CD4-positive, alpha-beta T cell (primary cell): ENCODE measurements at regions of chr22 and their contacts with region 1.

Region 1: GRCh38 chr22:40436505-40437451 is 66.4 kb downstream of the SGSM3 start:
- DNase-seq: peak in 5 of 14 experiments; percentile 20 to 80 (median 69)
- ATAC-seq: peak; percentile 84
- H3K4me3 ChIP-seq: no peak overlapping the region
- H3K4me3 Mint-ChIP-seq: peak overlapping the region; percentile 23
- H3K27ac ChIP-seq: peak overlapping the region in 1 of 2 donors; percentile 40
- H3K27ac Mint-ChIP-seq: peak overlapping the region; percentile 78
- H3K4me1 ChIP-seq: peaks cover 24% of the 10 kb centered on the region
- H3K4me1 Mint-ChIP-seq: peaks cover 52% of the 10 kb centered on the region
- H3K27me3 ChIP-seq: no peaks in the 10 kb centered on the region
- H3K27me3 Mint-ChIP-seq: no peaks in the 10 kb centered on the region
- CTCF ChIP-seq: peak; percentile 85

Region 2: GRCh38 chr22:38831166-38831945 is 1605.4 kb before region 1 on chr22:
- CTCF ChIA-PET with region 1: no interaction called
- POLR2A ChIA-PET with region 1: no interaction called
- intact Hi-C with region 1: no loop called
- DNase-seq: no peak
- ATAC-seq: no peak
- H3K4me3 ChIP-seq: no peak overlapping the region
- H3K4me3 Mint-ChIP-seq: no peak overlapping the region
- H3K27ac ChIP-seq: no peak overlapping the region
- H3K27ac Mint-ChIP-seq: no peak overlapping the region
- H3K4me1 ChIP-seq: no peaks in the 10 kb centered on the region
- H3K4me1 Mint-ChIP-seq: peaks cover 5% of the 10 kb centered on the region
- H3K27me3 ChIP-seq: no peaks in the 10 kb centered on the region
- H3K27me3 Mint-ChIP-seq: no peaks in the 10 kb centered on the region
- CTCF ChIP-seq: no peak

Region 3: GRCh38 chr22:40310081-40310767 is 126.6 kb before region 1 on chr22:
- CTCF ChIA-PET with region 1: no interaction called
- POLR2A ChIA-PET with region 1: no interaction called
- intact Hi-C with region 1: no loop called
- DNase-seq: no peak
- ATAC-seq: no peak
- H3K4me3 ChIP-seq: no peak overlapping the region
- H3K4me3 Mint-ChIP-seq: no peak overlapping the region
- H3K27ac ChIP-seq: no peak overlapping the region
- H3K27ac Mint-ChIP-seq: peak overlapping the region; percentile 67
- H3K4me1 ChIP-seq: peaks cover 14% of the 10 kb centered on the region
- H3K4me1 Mint-ChIP-seq: peaks cover 49% of the 10 kb centered on the region
- H3K27me3 ChIP-seq: no peaks in the 10 kb centered on the region
- H3K27me3 Mint-ChIP-seq: no peaks in the 10 kb centered on the region
- CTCF ChIP-seq: no peak

Region 4: GRCh38 chr22:40479126-40479800 is 42.5 kb after region 1 on chr22:
- CTCF ChIA-PET with region 1: interaction called, 25 read pairs
- POLR2A ChIA-PET with region 1: interaction called, 10 read pairs
- intact Hi-C with region 1: loop called (anchors 1 to 2 kb)
- DNase-seq: peak in 1 of 14 experiments; percentile 20
- ATAC-seq: no peak
- H3K4me3 ChIP-seq: no peak overlapping the region
- H3K4me3 Mint-ChIP-seq: no peak overlapping the region
- H3K27ac ChIP-seq: no peak overlapping the region
- H3K27ac Mint-ChIP-seq: peak overlapping the region; percentile 15
- H3K4me1 ChIP-seq: peaks cover 4% of the 10 kb centered on the region
- H3K4me1 Mint-ChIP-seq: peaks cover 54% of the 10 kb centered on the region
- H3K27me3 ChIP-seq: no peaks in the 10 kb centered on the region
- H3K27me3 Mint-ChIP-seq: no peaks in the 10 kb centered on the region
- CTCF ChIP-seq: peak; percentile 43

Region 5: GRCh38 chr22:40525249-40525884 is 88.6 kb after region 1 on chr22:
- CTCF ChIA-PET with region 1: interaction called, 17 read pairs
- POLR2A ChIA-PET with region 1: no interaction called
- intact Hi-C with region 1: no loop called
- DNase-seq: peak; percentile 67 to 85 (median 73)
- ATAC-seq: peak; percentile 82
- H3K4me3 ChIP-seq: no peak overlapping the region
- H3K4me3 Mint-ChIP-seq: no peak overlapping the region
- H3K27ac ChIP-seq: no peak overlapping the region
- H3K27ac Mint-ChIP-seq: peak overlapping the region; percentile 22
- H3K4me1 ChIP-seq: peaks cover 18% of the 10 kb centered on the region
- H3K4me1 Mint-ChIP-seq: peaks cover 55% of the 10 kb centered on the region
- H3K27me3 ChIP-seq: no peaks in the 10 kb centered on the region
- H3K27me3 Mint-ChIP-seq: no peaks in the 10 kb centered on the region
- CTCF ChIP-seq: peak; percentile 97

Region 6: GRCh38 chr22:40645579-40646197 is 208.9 kb after region 1 on chr22:
- CTCF ChIA-PET with region 1: interaction called, 38 read pairs
- POLR2A ChIA-PET with region 1: interaction called, 7 read pairs
- intact Hi-C with region 1: loop called (anchors 1 kb)
- DNase-seq: no peak
- ATAC-seq: no peak
- H3K4me3 ChIP-seq: no peak overlapping the region
- H3K4me3 Mint-ChIP-seq: no peak overlapping the region
- H3K27ac ChIP-seq: no peak overlapping the region
- H3K27ac Mint-ChIP-seq: no peak overlapping the region
- H3K4me1 ChIP-seq: peaks cover 15% of the 10 kb centered on the region
- H3K4me1 Mint-ChIP-seq: peaks cover 16% of the 10 kb centered on the region
- H3K27me3 ChIP-seq: no peaks in the 10 kb centered on the region
- H3K27me3 Mint-ChIP-seq: no peaks in the 10 kb centered on the region
- CTCF ChIP-seq: no peak

Region 7: DNA sequence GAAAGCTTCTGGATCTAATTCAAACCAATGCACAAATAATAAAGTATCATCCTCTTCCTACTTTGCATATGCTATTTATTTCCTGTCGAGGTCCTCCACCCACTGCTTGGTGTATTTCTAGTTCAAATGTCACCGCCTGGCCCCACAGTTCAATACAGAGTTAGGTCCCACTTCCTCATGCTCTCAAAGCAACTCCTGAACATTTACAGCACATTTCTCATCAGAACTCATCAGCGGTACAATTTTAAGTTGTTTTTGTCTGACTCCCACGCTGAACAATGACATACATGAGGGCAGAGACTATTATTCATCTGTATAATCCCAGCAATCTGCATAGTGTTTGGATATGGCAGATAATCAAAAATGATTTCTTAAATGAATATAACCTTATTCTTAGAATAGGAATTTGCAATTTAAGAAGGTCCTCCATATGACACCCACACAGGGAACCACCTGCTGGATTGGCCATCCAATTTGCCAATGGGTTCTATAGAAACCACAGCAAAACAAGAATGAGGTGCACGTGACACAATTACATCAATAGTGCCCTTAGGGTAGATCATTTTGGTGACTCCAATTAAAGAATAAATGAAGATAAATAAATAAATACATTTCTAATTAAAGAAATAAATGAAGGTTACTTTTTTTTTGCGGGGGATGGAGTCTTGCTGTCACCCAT is 328.1 kb after region 1 on chr22:
- CTCF ChIA-PET with region 1: no interaction called
- POLR2A ChIA-PET with region 1: no interaction called
- intact Hi-C with region 1: loop called in 1 of 2 experiments (anchors 1 kb)
- DNase-seq: peak in 10 of 14 experiments; percentile 5 to 65 (median 26)
- ATAC-seq: peak; percentile 81
- H3K4me3 ChIP-seq: no peak overlapping the region
- H3K4me3 Mint-ChIP-seq: peak overlapping the region; percentile 25
- H3K27ac ChIP-seq: peak overlapping the region; percentile 57 to 69
- H3K27ac Mint-ChIP-seq: peak overlapping the region; percentile 84
- H3K4me1 ChIP-seq: peaks cover 19% of the 10 kb centered on the region
- H3K4me1 Mint-ChIP-seq: peaks cover 23% of the 10 kb centered on the region
- H3K27me3 ChIP-seq: no peaks in the 10 kb centered on the region
- H3K27me3 Mint-ChIP-seq: no peaks in the 10 kb centered on the region
- CTCF ChIP-seq: no peak